Dendritic cell treated with granulocyte-macrophage colony-stimulating factor and Interleukin-4, amounts not matched to agents 40 ng/mL and 50 ng/mL, for 4 days (primary cell): ENCODE measurements at regions of chr13 and their contacts with region 1.

Region 1: DNA sequence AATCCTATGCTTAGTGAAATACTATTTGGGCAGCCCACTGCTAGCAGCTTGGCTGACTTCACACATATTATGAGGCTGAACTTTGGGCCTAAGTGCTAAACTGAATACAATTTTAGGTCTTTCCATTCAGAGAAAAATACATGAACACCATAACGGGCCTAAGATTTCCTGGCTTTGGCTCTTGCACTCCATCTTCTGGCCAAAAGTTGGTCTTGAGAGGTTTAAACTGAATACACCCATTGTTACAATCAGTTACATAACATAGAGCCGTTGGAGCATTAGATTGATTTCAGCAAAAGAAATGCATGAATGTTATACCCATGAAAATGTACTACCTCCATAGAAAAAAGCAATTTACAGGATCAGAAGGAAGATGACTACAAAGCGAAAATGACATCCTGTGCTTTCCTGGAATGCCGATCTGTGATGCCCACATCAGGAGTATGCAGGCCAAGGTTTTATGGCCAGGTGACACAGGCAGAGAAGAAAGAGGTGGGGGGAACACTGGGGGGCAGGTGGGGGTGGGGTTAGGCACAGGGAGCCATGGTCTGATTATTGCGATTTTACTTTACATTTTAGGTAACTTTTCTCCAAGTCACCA is 11.1 kb upstream of the SHISA2 start:
- H3K4me3 Mint-ChIP-seq: no peak overlapping the region
- H3K27ac Mint-ChIP-seq: no peak overlapping the region
- H3K4me1 Mint-ChIP-seq: no peaks in the 10 kb centered on the region
- H3K27me3 Mint-ChIP-seq: peaks cover 6% of the 10 kb centered on the region

Region 2: GRCh38 chr13:25827831-25828465 is 235.0 kb before region 1 on chr13:
- intact Hi-C with region 1: loop called (anchors 5 kb)
- H3K4me3 Mint-ChIP-seq: no peak overlapping the region
- H3K27ac Mint-ChIP-seq: no peak overlapping the region
- H3K4me1 Mint-ChIP-seq: no peaks in the 10 kb centered on the region
- H3K27me3 Mint-ChIP-seq: no peaks in the 10 kb centered on the region